CD4-positive, alpha-beta memory T cell (primary cell): ENCODE measurements at regions of chr19 and their contacts with region 1.

Region 1: DNA sequence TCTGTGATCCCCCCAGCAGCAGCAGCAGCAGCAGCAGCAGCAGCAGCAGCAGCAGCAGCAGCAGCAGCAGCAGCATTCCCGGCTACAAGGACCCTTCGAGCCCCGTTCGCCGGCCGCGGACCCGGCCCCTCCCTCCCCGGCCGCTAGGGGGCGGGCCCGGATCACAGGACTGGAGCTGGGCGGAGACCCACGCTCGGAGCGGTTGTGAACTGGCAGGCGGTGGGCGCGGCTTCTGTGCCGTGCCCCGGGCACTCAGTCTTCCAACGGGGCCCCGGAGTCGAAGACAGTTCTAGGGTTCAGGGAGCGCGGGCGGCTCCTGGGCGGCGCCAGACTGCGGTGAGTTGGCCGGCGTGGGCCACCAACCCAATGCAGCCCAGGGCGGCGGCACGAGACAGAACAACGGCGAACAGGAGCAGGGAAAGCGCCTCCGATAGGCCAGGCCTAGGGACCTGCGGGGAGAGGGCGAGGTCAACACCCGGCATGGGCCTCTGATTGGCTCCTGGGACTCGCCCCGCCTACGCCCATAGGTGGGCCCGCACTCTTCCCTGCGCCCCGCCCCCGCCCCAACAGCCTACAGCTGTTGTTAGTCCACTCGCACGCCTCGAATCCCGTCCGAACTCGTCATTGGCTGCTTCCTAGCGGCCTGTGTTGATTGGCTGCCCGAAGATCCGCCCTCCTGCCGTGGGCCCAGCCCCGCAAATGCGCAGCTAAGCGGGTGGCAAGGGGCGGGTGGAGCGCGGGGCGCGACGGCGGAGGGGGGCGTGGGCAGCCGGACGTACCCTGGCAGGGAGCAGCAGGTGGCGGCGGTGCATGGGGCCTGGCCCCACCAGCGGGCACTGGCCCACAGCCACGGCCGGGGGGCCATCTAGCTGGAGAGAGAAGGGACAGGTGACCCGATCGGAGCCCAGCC is 1.4 kb upstream of the SIX5 start:
- DNase-seq: peak; percentile 89 to 93 (median 91)
- H3K4me3 ChIP-seq: peak overlapping the region; percentile 57 to 71
- H3K4me3 Mint-ChIP-seq: peak overlapping the region; percentile 84 to 92 (median 86)
- H3K27ac ChIP-seq: peak overlapping the region; percentile 15
- H3K27ac Mint-ChIP-seq: peak overlapping the region; percentile 61 to 94 (median 88)
- H3K4me1 ChIP-seq: peaks cover 22% of the 10 kb centered on the region
- H3K4me1 Mint-ChIP-seq: peaks cover 1 to 30% (median 5%) of the 10 kb centered on the region in 4 donors
- H3K27me3 ChIP-seq: no peaks in the 10 kb centered on the region
- H3K27me3 Mint-ChIP-seq: peaks cover 1 to 6% of the 10 kb centered on the region in 2 donors

Region 2: DNA sequence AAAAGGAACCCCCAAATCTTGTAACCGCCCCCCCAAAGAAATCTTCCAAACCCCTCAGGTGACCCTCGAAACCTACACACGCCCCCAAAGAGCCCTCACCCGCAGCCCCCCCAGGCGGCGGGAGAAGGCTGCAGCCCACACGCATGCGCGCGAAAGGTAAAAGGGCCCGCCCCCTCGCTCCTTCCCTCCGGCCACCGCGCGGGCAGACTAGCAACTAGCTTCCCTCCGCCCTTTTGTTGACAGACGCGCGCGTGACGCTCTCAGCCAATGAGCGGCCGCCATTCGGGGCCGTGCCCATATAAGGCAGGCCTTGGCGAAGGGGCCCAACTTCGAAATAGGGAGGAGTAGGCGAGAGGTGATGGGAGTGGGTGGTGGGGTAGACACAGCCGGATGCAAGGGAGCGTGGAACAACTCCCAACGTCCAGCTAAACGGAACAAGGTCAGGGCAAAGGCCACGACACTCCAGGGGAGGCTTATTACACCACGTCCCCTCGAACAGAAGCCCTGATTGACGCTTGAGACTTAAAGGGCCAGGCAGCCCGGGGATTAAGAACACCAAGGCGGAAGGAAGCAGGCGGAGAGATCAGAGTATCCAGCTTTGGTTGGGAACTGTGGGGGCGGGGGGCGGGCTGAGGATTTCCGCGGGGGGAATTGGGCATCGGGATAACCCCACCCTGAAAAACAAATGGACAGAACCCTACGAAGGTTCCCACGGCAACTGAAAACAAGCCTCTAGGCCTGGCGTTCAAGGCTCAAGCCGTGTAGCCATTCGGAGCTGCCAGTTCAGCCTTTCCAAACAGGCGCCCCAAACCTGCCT is 53.1 kb before region 1 on chr19:
- CTCF ChIA-PET with region 1: interaction called, 8 read pairs
- POLR2A ChIA-PET with region 1: interaction called, 23 read pairs
- intact Hi-C with region 1: loop called (anchors 5 kb)
- DNase-seq: peak; percentile 97 to 99 (median 98)
- H3K4me3 ChIP-seq: peak overlapping the region; percentile 72 to 90
- H3K4me3 Mint-ChIP-seq: peak overlapping the region; percentile 92 to 99 (median 97)
- H3K27ac ChIP-seq: peak overlapping the region; percentile 86
- H3K27ac Mint-ChIP-seq: peak overlapping the region; percentile 84 to 99 (median 98)
- H3K4me1 ChIP-seq: peaks cover 38% of the 10 kb centered on the region
- H3K4me1 Mint-ChIP-seq: peaks cover 32 to 59% (median 39%) of the 10 kb centered on the region in 4 donors
- H3K27me3 ChIP-seq: no peaks in the 10 kb centered on the region
- H3K27me3 Mint-ChIP-seq: no peaks in the 10 kb centered on the region

Region 3: DNA sequence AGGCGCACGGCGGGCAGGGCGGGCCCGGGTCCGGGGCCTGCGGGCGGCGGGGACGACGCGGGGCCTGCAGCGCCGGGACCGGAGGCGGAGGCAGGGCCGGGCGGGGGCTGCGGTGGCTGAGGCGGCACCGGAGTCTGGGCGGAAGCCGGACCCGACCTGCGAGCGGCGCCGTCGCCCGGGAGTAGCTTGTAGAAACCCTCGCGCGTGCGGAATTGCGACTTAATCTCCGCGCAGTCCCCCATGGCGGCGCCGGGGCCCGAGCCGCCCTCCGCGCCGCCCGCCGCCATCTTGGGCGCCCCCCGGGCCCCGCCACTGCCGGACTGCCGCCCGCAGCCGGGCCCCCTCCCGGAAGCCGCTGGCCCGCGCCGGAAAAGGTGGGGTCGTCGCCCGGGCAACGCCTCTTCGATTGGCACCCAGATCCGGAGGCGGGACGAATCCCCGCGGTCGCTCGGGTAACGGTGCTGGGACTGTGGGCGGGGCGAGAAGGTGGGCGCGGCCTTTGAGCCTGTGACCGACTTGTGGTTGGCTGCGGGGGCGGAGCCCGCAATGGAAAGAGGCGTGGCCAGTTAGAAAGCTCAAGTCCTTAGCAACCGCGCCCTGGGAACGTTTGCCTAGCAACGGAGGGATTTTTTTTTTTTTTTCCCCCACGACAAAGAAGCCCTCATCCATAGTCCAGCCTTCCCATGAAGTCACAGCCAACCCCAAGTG is 22.2 kb after region 1 on chr19 and contains the start of gene DMWD:
- CTCF ChIA-PET with region 1: interaction called, 238 read pairs
- POLR2A ChIA-PET with region 1: interaction called, 84 read pairs
- intact Hi-C with region 1: loop called (anchors 1 kb)
- DNase-seq: peak; percentile 97 to 99 (median 98)
- H3K4me3 ChIP-seq: peak within 1 kb of the TSS; percentile 33 to 62
- H3K4me3 Mint-ChIP-seq: peak within 1 kb of the TSS; percentile 82 to 92 (median 89)
- H3K27ac ChIP-seq: no peak within 1 kb of the TSS
- H3K27ac Mint-ChIP-seq: peak within 1 kb of the TSS; percentile 79 to 96 (median 91)
- H3K4me1 ChIP-seq: peaks cover 32% of the 10 kb centered on the region
- H3K4me1 Mint-ChIP-seq: peaks cover 31 to 46% (median 36%) of the 10 kb centered on the region in 4 donors
- H3K27me3 ChIP-seq: peaks cover 4% of the 10 kb centered on the region
- H3K27me3 Mint-ChIP-seq: peaks cover 8 to 20% of the 10 kb centered on the region in 2 donors
- total RNA-seq, gene DMWD: 49.3 to 52.6 TPM

Region 4: GRCh38 chr19:45817010-45817724 is 46.7 kb after region 1 on chr19:
- CTCF ChIA-PET with region 1: interaction called, 4 read pairs
- POLR2A ChIA-PET with region 1: interaction called, 5 read pairs
- intact Hi-C with region 1: loop called (anchors 1 kb)
- DNase-seq: peak; percentile 92 to 95 (median 92)
- H3K4me3 ChIP-seq: no peak overlapping the region
- H3K4me3 Mint-ChIP-seq: peak overlapping the region in 2 of 8 donors; percentile 28 to 62
- H3K27ac ChIP-seq: no peak overlapping the region
- H3K27ac Mint-ChIP-seq: peak overlapping the region in 5 of 7 donors; percentile 36 to 89 (median 74)
- H3K4me1 ChIP-seq: peaks cover 4% of the 10 kb centered on the region
- H3K4me1 Mint-ChIP-seq: peaks cover 0 to 6% (median 4%) of the 10 kb centered on the region in 4 donors
- H3K27me3 ChIP-seq: no peaks in the 10 kb centered on the region
- H3K27me3 Mint-ChIP-seq: no peaks in the 10 kb centered on the region

Region 5: DNA sequence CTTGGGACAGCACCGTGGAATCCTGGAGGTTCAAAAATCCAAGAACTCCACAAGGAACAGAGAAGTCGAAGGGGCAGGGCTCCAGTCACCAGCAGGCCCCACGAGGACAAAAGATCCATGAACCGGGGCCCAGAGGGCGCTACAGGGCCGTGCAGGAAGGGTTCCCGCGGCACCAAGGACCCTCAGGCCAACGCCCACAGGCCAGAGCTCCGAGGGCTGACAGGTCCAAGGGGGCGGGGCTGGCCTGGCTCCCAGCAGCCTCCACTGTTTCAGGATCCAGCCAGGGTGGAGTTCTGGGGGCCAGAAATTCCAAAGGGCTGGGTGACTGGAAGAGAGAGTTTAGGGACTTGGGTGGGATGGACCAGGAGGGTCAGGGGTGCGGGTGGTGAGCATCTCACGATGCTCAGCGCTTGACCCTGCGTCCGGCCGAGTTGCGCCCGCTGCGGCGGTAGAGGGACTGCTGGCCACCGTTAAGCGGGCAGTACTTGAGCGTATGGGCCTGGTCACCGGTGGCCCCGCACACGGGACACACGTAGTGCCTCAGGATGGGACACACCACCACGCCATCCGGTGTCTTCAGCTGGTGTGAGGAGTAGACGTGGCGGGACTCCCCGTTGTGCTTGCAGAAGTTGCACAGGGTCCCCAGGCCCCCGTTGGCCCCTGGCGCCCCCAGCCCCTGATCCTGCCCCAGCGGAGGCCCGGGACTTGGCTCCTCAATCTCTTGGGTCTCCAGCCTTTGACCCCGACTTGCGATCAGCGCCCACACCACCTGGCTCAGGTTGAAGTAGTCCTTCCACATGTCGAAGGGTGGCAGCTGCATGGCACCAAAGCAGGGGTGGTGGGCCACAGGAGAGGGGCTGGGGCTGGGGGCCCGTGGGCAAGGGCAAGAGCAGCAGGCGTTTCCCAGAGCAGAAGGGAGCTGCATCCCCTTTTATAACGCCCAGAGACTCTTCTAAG is 143.7 kb after region 1 on chr19 and contains the start of gene NANOS2:
- CTCF ChIA-PET with region 1: no interaction called
- POLR2A ChIA-PET with region 1: no interaction called
- intact Hi-C with region 1: no loop called
- DNase-seq: no peak
- H3K4me3 ChIP-seq: no peak within 1 kb of the TSS
- H3K4me3 Mint-ChIP-seq: no peak within 1 kb of the TSS
- H3K27ac ChIP-seq: no peak within 1 kb of the TSS
- H3K27ac Mint-ChIP-seq: no peak within 1 kb of the TSS
- H3K4me1 ChIP-seq: no peaks in the 10 kb centered on the region
- H3K4me1 Mint-ChIP-seq: no peaks in the 10 kb centered on the region
- H3K27me3 ChIP-seq: no peaks in the 10 kb centered on the region
- H3K27me3 Mint-ChIP-seq: peaks cover 22 to 23% of the 10 kb centered on the region in 2 donors
- total RNA-seq, gene NANOS2: not detected

Region 6: DNA sequence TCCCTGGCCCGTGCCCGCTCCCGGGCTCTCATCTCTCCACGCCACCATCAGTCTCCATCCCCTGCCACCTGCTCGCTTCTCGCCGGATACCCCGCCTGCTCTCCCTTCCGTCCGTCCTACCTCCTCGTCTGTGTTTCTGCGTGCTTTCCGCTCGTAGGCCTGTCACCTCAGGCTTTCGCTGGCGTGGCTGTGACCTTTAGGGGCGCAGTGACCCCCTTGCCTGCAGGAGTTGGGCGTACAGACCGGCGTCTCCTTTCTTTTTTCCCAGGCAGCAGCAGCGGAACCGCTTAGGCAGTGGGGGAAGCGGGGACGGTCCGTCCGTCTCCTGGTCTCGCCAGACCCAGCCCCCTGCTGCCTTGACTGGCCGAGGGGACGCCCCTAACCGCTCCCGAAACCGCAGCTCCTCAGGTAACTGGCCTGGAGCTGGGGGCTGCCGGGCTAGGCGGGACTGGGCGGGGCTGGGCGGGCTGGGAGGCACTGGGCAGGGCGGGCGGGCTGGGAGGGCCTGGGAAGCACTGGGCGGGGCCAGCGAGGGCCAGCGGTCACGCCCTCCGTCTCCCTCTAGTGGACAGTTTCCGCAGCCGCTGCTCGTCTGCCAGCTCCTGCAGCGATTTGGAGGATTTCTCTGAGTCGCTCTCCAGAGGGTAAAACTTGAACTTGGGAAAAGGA is 246.1 kb after region 1 on chr19:
- CTCF ChIA-PET with region 1: no interaction called
- POLR2A ChIA-PET with region 1: no interaction called
- intact Hi-C with region 1: loop called (anchors 5 kb)
- DNase-seq: peak; percentile 69 to 79 (median 76)
- H3K4me3 ChIP-seq: peak overlapping the region; percentile 76 to 80
- H3K4me3 Mint-ChIP-seq: peak overlapping the region; percentile 86 to 94 (median 91)
- H3K27ac ChIP-seq: peak overlapping the region; percentile 53
- H3K27ac Mint-ChIP-seq: peak overlapping the region; percentile 10 to 88 (median 71)
- H3K4me1 ChIP-seq: peaks cover 14% of the 10 kb centered on the region
- H3K4me1 Mint-ChIP-seq: peaks cover 12 to 21% (median 16%) of the 10 kb centered on the region in 4 donors
- H3K27me3 ChIP-seq: no peaks in the 10 kb centered on the region
- H3K27me3 Mint-ChIP-seq: peaks cover 0 to 5% of the 10 kb centered on the region in 2 donors